ENCODE measurements at regions of chr12 and their contacts with region 1.

Region 1: GRCh38 chr12:6944381-6945186 is 762 bp downstream of the C12orf57 start:
- DNase-seq: peak; percentile 93
- ATAC-seq: peak; percentile 52
- H3K4me3 Mint-ChIP-seq: peak overlapping the region; percentile 88
- H3K27ac Mint-ChIP-seq: peak overlapping the region; percentile 97
- H3K4me1 Mint-ChIP-seq: peaks cover 75% of the 10 kb centered on the region
- H3K27me3 Mint-ChIP-seq: peaks cover 2% of the 10 kb centered on the region

Region 2: GRCh38 chr12:6851921-6852650 is 92.5 kb before region 1 on chr12 and contains the start of gene USP5:
- CTCF ChIA-PET with region 1: interaction called, 3 read pairs
- POLR2A ChIA-PET with region 1: interaction called, 18 read pairs
- DNase-seq: peak; percentile 99
- ATAC-seq: peak; percentile 83
- H3K4me3 Mint-ChIP-seq: peak within 1 kb of the TSS; percentile 90
- H3K27ac Mint-ChIP-seq: peak within 1 kb of the TSS; percentile 98
- H3K4me1 Mint-ChIP-seq: peaks cover 44% of the 10 kb centered on the region
- H3K27me3 Mint-ChIP-seq: no peaks in the 10 kb centered on the region
- total RNA-seq, gene USP5: 105 to 108 TPM

Region 3: DNA sequence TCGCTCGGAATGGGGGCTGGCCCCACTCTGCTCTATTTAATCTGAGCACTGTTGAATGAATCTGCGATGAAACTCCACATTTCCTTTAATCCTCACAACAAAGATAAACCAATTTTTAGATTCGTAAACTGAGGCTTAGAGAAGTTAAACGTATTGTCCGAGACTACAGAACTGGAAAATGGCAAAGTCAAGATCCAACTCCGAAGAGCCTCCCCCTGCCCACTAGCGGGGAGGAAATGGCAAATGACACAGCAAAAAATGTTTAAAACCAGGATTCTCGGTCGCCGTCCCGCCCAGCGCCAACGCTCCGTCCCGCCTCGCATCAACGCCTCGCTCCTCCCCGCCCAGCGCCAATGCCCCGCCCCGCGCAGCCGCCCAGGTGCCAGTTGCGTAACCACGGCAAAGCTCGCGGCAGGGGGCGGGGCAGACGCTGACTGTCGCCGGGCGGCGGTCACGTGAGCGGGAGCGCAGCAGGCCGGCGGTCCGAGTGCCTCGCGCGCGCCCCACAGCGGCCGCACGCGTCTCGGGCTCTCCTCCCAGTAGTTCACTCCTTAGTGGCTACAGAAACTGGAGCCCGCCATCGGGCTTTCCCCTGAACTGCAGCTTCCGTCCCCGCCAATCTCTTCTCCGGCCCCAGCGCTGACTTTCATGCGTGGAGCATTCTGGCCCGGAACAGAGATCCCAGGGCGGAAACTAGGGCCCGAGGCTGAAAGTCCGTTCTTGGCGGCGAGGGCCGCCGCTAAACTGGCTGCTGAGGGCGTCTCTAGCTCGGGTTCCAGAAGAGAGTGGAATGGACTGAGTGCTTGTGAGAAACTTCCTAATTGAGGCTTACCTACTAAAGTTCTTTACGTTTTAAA is 53.6 kb before region 1 on chr12:
- CTCF ChIA-PET with region 1: interaction called, 5 read pairs
- POLR2A ChIA-PET with region 1: interaction called, 22 read pairs
- DNase-seq: peak; percentile 99
- ATAC-seq: peak; percentile 97
- H3K4me3 Mint-ChIP-seq: peak overlapping the region; percentile 82
- H3K27ac Mint-ChIP-seq: peak overlapping the region; percentile 95
- H3K4me1 Mint-ChIP-seq: peaks cover 29% of the 10 kb centered on the region
- H3K27me3 Mint-ChIP-seq: no peaks in the 10 kb centered on the region

Region 4: GRCh38 chr12:6921996-6922946 is 22.3 kb before region 1 on chr12:
- CTCF ChIA-PET with region 1: interaction called, 106 read pairs
- POLR2A ChIA-PET with region 1: interaction called, 94 read pairs
- DNase-seq: no peak
- ATAC-seq: no peak
- H3K4me3 Mint-ChIP-seq: no peak overlapping the region
- H3K27ac Mint-ChIP-seq: no peak overlapping the region
- H3K4me1 Mint-ChIP-seq: peaks cover 56% of the 10 kb centered on the region
- H3K27me3 Mint-ChIP-seq: no peaks in the 10 kb centered on the region

Region 5: DNA sequence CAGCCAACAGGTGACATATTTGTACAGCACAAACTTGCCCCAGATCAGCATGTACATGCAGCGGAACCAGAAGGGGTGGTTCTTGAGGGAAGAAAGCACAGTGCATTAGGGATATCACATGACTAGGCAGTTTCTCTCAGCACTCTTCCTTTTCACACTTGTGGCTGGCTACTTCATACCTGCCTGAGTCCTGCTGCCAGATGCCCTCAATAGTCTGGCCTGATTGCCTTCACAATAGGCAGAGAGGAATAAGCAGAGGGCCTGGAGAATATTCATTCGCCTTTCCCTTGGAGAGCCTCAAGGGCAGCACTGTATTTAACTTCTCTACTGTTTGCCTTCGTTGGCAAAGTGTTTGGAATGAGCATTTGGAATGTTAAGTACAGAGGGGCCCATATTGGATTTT is 34.0 kb after region 1 on chr12:
- CTCF ChIA-PET with region 1: interaction called, 7 read pairs
- POLR2A ChIA-PET with region 1: interaction called, 39 read pairs
- DNase-seq: no peak
- ATAC-seq: no peak
- H3K4me3 Mint-ChIP-seq: no peak overlapping the region
- H3K27ac Mint-ChIP-seq: no peak overlapping the region
- H3K4me1 Mint-ChIP-seq: peaks cover 22% of the 10 kb centered on the region
- H3K27me3 Mint-ChIP-seq: no peaks in the 10 kb centered on the region

Region 6: GRCh38 chr12:7108796-7109571 is 164.4 kb after region 1 on chr12 and contains the start of gene C1RL:
- CTCF ChIA-PET with region 1: interaction called, 107 read pairs
- POLR2A ChIA-PET with region 1: interaction called, 74 read pairs
- DNase-seq: peak; percentile 85
- ATAC-seq: peak; percentile 27
- H3K4me3 Mint-ChIP-seq: peak within 1 kb of the TSS; percentile 95
- H3K27ac Mint-ChIP-seq: peak within 1 kb of the TSS; percentile 92
- H3K4me1 Mint-ChIP-seq: peaks cover 58% of the 10 kb centered on the region
- H3K27me3 Mint-ChIP-seq: no peaks in the 10 kb centered on the region
- total RNA-seq, gene C1RL: 21.5 to 23.3 TPM

Measured in activated CD8-positive, alpha-beta T cell treated with anti-CD3 and anti-CD28 coated beads, Interleukin-2, amount 10 ng/mL, durations not matched to agents 7 days and 5 days (primary cell).